Activated CD4-positive, alpha-beta memory T cell treated with anti-CD3 and anti-CD28 coated beads for 36 hours (primary cell): ENCODE measurements at regions of chr11 and their contacts with region 1.

Region 1: DNA sequence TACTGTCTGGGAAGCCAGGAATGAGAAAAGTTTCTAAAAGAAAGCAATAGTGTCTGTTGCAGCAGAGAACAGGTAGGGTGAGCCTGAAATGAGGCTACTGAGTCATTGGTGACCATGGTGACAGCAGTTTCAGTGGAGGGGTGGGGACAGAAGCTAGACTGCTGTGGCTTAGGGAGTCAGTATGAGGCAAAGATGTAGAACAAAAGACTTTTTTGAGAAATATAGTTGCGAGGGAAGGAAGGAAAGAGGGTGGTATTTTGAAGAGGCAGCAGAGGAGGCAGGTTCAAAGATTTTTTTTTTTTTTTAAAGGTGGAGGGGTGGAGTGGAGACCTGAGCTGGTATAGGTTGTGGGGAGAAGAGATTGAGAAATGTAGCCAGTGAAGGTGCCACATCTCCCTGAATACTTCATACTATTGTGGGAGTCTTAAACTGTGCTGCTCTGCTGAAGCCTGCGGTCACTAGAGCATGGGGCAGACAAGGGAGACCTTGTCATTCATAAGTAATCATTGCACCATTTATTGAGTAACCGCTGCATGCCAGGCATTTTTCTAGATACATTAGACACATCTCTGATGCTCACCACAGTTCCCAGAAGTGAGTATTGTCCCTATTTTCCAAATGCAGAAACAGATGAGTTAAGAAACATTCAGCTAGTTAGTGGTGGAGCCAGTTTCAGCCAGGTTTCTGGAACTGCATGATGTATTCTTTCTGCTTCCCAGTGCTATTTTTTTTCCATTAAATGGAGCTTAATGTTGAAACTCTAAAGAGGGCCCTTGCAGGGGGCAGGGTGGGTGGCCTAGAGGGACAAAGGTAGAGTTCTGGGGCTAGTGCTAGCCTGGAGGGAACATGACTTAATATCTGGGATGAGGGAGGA is 49.9 kb downstream of the STIM1 start:
- DNase-seq: peak; percentile 86
- H3K4me3 Mint-ChIP-seq: peak overlapping the region; percentile 35
- H3K27ac Mint-ChIP-seq: peak overlapping the region; percentile 80
- H3K4me1 Mint-ChIP-seq: peaks cover 77% of the 10 kb centered on the region
- H3K27me3 Mint-ChIP-seq: no peaks in the 10 kb centered on the region

Region 2: GRCh38 chr11:3849297-3849874 is 55.9 kb before region 1 on chr11:
- CTCF ChIA-PET with region 1: interaction called, 38 read pairs
- POLR2A ChIA-PET with region 1: interaction called, 3 read pairs
- intact Hi-C with region 1: loop called (anchors 1 kb)
- DNase-seq: peak; percentile 42
- H3K4me3 Mint-ChIP-seq: no peak overlapping the region
- H3K27ac Mint-ChIP-seq: peak overlapping the region; percentile 34
- H3K4me1 Mint-ChIP-seq: peaks cover 37% of the 10 kb centered on the region
- H3K27me3 Mint-ChIP-seq: no peaks in the 10 kb centered on the region

Region 3: GRCh38 chr11:3861683-3862082 is 43.6 kb before region 1 on chr11:
- CTCF ChIA-PET with region 1: interaction called, 3 read pairs
- POLR2A ChIA-PET with region 1: interaction called, 4 read pairs
- intact Hi-C with region 1: loop called (anchors 1 kb)
- DNase-seq: peak; percentile 55
- H3K4me3 Mint-ChIP-seq: peak overlapping the region; percentile 45
- H3K27ac Mint-ChIP-seq: peak overlapping the region; percentile 90
- H3K4me1 Mint-ChIP-seq: peaks cover 83% of the 10 kb centered on the region
- H3K27me3 Mint-ChIP-seq: no peaks in the 10 kb centered on the region

Region 4: GRCh38 chr11:3867209-3868091 is 37.9 kb before region 1 on chr11:
- CTCF ChIA-PET with region 1: interaction called, 3 read pairs
- POLR2A ChIA-PET with region 1: interaction called, 4 read pairs
- intact Hi-C with region 1: loop called (anchors 1 kb)
- DNase-seq: peak; percentile 68
- H3K4me3 Mint-ChIP-seq: no peak overlapping the region
- H3K27ac Mint-ChIP-seq: peak overlapping the region; percentile 87
- H3K4me1 Mint-ChIP-seq: peaks cover 71% of the 10 kb centered on the region
- H3K27me3 Mint-ChIP-seq: no peaks in the 10 kb centered on the region

Region 5: DNA sequence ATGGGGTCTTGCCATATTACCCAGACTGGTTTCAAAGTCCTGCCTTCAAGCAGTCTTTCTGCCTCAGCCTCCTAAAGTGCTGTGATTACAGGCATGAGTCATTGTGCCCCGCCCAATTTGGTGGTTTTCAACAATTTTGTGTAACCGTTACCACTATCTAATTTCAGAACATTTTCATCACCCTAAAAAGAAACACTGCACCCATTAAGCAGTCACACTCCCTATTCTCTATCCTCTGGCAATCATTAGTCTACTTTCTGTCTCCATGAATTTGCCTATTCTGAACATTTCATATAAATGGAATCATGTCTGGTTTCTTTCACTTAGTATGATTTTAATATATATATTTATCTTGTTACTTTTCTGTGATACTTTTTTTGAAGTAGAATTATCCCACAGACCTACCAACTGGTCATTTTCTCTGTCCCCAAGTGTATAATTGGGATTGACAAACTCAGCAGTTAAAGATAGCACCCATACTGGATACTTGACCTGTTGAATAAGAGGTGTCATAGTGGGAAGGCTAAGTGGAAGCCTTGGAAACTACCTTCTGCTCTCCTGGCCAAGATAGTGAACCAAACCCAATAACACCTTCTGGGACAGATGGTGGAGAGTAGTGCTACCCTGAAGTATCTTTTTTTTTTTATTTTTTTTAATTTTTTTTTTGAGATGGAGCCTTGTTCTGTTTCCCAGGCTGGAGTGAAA is 15.0 kb after region 1 on chr11:
- CTCF ChIA-PET with region 1: interaction called, 3 read pairs
- POLR2A ChIA-PET with region 1: no interaction called
- intact Hi-C with region 1: loop called (anchors 2 kb)
- DNase-seq: peak; percentile 87
- H3K4me3 Mint-ChIP-seq: no peak overlapping the region
- H3K27ac Mint-ChIP-seq: peak overlapping the region; percentile 77
- H3K4me1 Mint-ChIP-seq: peaks cover 61% of the 10 kb centered on the region
- H3K27me3 Mint-ChIP-seq: no peaks in the 10 kb centered on the region

Region 6: DNA sequence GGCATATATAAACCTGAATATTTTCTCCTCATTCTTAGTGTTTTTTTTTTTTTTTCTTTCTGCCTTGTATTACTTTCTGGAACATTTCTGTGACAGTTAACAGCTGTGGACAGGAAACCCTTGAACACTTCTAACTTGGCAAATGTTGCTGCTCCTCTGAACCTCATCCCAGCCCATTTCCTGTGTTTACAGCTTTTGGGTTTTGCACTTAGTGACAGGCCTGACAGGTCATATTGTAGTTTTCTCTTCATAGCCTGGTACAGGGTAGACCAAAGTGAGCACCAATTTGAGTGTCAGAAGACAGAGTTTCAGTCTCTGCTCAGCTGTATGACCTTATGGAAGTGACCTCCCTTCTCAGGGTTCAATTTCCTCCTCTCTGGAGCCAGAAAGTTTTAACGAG is 41.7 kb after region 1 on chr11:
- CTCF ChIA-PET with region 1: no interaction called
- POLR2A ChIA-PET with region 1: interaction called, 7 read pairs
- intact Hi-C with region 1: loop called (anchors 1 kb)
- DNase-seq: peak; percentile 69
- H3K4me3 Mint-ChIP-seq: peak overlapping the region; percentile 40
- H3K27ac Mint-ChIP-seq: peak overlapping the region; percentile 93
- H3K4me1 Mint-ChIP-seq: peaks cover 94% of the 10 kb centered on the region
- H3K27me3 Mint-ChIP-seq: no peaks in the 10 kb centered on the region

Region 7: GRCh38 chr11:3959015-3959919 is 54.0 kb after region 1 on chr11:
- CTCF ChIA-PET with region 1: no interaction called
- POLR2A ChIA-PET with region 1: no interaction called
- intact Hi-C with region 1: no loop called
- DNase-seq: no peak
- H3K4me3 Mint-ChIP-seq: no peak overlapping the region
- H3K27ac Mint-ChIP-seq: peak overlapping the region; percentile 11
- H3K4me1 Mint-ChIP-seq: peaks cover 76% of the 10 kb centered on the region
- H3K27me3 Mint-ChIP-seq: no peaks in the 10 kb centered on the region

Region 8: DNA sequence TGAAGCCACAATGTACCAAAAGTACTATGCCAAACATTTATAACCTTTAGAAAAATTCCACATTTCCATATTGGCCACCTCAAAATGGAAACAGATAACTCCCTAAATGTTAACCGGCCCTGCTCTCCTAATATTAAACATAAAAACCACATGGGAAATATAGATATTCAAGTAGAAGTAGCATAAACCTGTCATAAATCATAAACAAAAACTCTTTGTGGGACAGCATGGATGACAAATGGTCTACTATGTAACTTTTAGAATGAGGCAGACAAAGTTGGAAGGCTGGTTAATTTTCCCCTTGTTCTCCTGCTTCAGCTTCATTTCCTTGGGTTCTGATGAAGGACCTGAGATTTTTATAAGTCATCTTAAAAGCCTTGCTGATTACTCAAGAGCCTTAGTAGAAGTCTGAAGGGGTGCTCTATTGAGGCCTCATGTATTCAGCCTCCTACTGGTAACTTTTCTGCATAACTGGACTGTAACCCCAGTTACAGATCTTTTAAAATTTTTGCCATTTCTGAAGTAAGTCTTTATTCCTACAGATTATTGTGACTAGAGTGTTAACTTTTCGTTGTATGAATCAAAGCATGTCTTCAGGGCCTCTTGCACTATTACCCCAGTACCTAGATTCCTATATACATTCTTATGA is 66.6 kb after region 1 on chr11:
- CTCF ChIA-PET with region 1: interaction called, 3 read pairs
- POLR2A ChIA-PET with region 1: no interaction called
- intact Hi-C with region 1: loop called (anchors 1 kb)
- DNase-seq: no peak
- H3K4me3 Mint-ChIP-seq: no peak overlapping the region
- H3K27ac Mint-ChIP-seq: peak overlapping the region; percentile 44
- H3K4me1 Mint-ChIP-seq: peaks cover 61% of the 10 kb centered on the region
- H3K27me3 Mint-ChIP-seq: no peaks in the 10 kb centered on the region